ENCODE measurements at regions of chr2 and their contacts with region 1.

Region 1: DNA sequence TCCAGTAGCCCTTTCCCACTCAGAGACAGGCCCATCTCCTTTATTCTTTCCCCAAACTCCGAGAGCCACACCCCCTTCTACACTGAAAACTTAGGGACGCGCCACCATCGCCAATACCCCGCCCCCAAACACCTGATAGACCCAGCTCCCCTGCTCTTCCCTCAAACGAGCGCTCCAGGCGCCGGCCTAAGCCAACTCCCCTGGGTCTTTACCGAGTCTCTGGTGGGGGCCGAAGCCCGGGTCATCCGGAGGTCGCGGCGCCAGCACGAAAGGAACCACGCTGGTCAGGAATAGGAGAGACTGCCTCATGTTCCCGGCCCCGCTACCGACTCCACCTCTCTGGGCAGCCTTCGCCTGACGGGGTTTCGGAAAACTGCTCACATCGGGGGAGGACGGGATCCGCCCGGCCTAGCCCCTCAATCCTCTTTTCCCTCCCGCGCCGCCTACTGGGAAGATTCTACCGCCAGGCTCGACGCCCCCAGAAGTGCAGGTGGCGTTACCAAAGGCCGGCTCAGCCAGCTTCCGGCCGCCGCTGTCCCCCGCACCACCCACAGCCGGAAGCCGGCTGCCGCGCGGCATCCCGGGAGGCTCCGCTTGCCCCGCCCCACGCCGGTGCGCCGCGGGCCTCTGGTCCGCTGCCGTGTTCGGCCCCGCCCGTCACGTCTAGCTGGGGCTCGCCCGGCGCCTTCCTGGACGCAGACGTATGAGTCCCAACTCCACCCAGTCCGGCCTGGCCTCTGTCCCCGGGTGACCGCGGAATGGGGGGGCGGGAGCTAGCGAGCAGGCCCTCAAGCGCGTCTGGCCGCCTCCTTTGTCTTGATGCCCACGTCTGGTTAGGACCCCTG is at the start of gene ADAM17:
- DNase-seq: peak; percentile 99
- total RNA-seq, gene ADAM17: 18.9 TPM

Region 2: DNA sequence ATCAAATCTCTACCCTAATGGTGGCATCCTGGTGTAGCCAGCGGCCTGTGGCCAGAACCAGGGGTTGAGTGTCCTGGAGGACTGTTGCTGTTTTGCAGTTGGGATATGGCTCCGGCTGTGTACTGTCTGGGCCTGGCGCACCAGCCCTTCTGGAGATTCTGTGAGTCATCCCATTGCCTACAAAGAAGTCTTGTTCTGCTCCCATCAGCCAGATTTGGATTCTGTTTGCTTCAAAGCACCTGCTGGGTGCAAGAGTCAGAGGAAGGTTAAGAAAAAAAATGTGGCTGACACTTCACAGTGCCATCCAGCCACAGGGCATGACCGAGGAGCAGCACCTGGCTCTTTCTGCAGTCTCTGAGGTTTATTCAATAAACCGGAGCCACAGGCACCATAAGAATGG is 389.9 kb before region 1 on chr2:
- intact Hi-C with region 1: no loop called
- DNase-seq: no peak

Region 3: DNA sequence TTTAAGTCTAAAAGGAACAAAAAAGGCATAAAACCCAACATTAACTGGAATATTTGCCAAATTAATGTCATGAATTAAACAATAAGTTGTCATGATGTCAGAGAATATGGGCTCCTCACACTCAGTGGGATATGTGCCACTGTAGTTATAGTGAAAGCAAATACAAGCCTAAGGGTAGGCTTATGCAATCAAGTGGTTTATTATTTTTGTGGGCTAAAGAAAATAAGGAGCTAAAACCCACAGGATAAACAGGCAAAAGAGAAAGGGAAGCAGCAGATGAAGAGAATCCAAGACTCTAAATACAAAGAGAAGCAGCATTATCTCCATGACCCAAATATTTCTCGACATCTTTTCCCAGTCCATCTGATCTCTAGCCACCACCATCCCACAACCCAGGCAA is 57.8 kb after region 1 on chr2:
- intact Hi-C with region 1: loop called (anchors 5 kb)
- DNase-seq: no peak

Region 4: DNA sequence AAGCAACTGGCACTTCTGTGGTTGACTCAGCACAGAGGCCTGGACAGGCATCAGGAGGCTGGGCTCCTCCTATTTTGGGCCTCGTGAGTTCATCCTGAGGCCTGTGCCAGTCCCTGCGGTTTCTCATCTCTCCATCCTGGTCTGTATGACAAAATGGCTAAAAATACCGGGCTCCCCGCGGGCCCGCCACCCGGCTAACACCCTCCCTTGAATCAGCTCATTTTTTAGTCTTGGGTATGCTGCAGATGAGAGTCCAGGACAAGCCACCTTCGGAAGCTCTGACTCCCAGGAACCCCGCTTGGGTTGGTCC is 137.6 kb after region 1 on chr2:
- intact Hi-C with region 1: loop called (anchors 5 kb)
- DNase-seq: peak; percentile 85

Region 5: GRCh38 chr2:9770308-9771100 is 215.0 kb after region 1 on chr2:
- intact Hi-C with region 1: loop called (anchors 5 kb)
- DNase-seq: no peak